Caco-2 (cell line): ENCODE measurements at regions of chr3 and their contacts with region 1.

Region 1: DNA sequence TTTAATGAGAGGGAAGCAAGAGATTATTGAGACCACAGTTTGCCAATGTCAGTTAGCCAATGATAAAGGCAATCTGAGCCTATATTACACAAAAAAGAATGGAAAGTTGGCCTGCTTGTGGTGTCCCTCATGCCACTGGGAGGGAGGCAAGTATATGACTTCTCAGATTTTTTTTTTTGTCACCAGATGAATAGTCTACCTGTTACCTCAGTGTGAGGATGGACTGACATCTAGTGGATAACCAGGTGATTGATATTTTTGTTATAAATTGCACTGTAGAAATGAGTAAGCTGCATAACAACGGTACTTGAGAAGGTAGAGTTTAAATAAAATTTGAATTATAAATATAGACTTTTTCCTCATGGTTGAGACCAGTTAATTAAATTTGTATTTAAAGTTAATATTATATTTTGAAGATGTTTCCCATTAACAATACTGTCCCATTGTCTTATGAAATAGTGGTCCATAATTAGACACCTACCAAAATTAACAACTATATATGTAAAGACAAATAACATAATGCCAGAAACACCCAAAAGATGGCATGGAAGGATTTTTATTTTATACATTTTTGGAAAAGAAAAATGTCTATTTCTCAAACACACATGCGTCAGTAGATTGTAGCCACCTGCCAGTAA is 237.8 kb upstream of the GADL1 start:
- DNase-seq: peak in 1 of 2 experiments; percentile 60
- H3K4me3 ChIP-seq: no peak overlapping the region
- H3K4me3 Mint-ChIP-seq: no peak overlapping the region
- H3K27ac Mint-ChIP-seq: no peak overlapping the region
- H3K4me1 ChIP-seq: peaks cover 8% of the 10 kb centered on the region
- H3K4me1 Mint-ChIP-seq: no peaks in the 10 kb centered on the region
- H3K27me3 ChIP-seq: no peaks in the 10 kb centered on the region
- H3K27me3 Mint-ChIP-seq: no peaks in the 10 kb centered on the region
- CTCF ChIP-seq: peak; percentile 63 to 69

Region 2: GRCh38 chr3:30012941-30013543 is 1119.2 kb before region 1 on chr3:
- CTCF ChIA-PET with region 1: no interaction called
- POLR2A ChIA-PET with region 1: no interaction called
- intact Hi-C with region 1: loop called (anchors 2 kb)
- DNase-seq: peak; percentile 71 to 76
- H3K4me3 ChIP-seq: no peak overlapping the region
- H3K4me3 Mint-ChIP-seq: no peak overlapping the region
- H3K27ac Mint-ChIP-seq: no peak overlapping the region
- H3K4me1 ChIP-seq: no peaks in the 10 kb centered on the region
- H3K4me1 Mint-ChIP-seq: no peaks in the 10 kb centered on the region
- H3K27me3 ChIP-seq: no peaks in the 10 kb centered on the region
- H3K27me3 Mint-ChIP-seq: no peaks in the 10 kb centered on the region
- CTCF ChIP-seq: peak; percentile 64 to 66

Region 3: GRCh38 chr3:30768703-30769685 is 363.3 kb before region 1 on chr3:
- CTCF ChIA-PET with region 1: interaction called, 14 read pairs
- POLR2A ChIA-PET with region 1: no interaction called
- intact Hi-C with region 1: loop called (anchors 1 kb)
- DNase-seq: peak; percentile 65 to 74
- H3K4me3 ChIP-seq: no peak overlapping the region
- H3K4me3 Mint-ChIP-seq: no peak overlapping the region
- H3K27ac Mint-ChIP-seq: no peak overlapping the region
- H3K4me1 ChIP-seq: peaks cover 14% of the 10 kb centered on the region
- H3K4me1 Mint-ChIP-seq: no peaks in the 10 kb centered on the region
- H3K27me3 ChIP-seq: no peaks in the 10 kb centered on the region
- H3K27me3 Mint-ChIP-seq: no peaks in the 10 kb centered on the region
- CTCF ChIP-seq: peak; percentile 78 to 79

Region 4: DNA sequence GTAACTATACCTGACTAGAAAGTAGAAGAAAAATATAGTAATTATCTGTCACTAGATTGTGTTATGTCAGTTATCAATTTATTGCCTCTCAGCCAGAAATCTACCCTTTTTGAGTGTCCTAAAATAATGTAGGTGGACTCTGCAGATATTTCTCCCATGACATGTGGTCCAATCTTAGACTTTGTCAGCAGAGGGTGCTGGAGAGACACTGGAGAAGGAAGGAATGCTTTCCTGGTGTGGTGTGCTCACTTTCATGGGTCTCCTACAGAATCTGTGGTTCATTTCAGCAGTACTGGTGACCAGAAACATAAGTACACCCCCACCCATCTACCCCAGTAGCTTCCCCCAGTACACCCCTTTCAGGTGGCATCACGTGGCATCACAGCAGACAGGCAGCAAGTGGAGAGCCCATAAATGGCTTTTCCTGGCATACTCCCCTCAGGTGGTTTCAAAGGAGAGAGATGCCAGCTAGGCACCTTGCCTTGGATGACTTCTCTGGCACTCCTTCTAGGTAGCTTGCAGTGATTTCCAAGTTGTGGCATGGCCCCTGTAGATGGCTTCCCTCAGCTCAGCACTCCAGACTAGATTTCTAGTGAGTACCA is 352.5 kb before region 1 on chr3:
- CTCF ChIA-PET with region 1: interaction called, 4 read pairs
- POLR2A ChIA-PET with region 1: no interaction called
- intact Hi-C with region 1: loop called (anchors 1 kb)
- DNase-seq: peak; percentile 42 to 70
- H3K4me3 ChIP-seq: no peak overlapping the region
- H3K4me3 Mint-ChIP-seq: no peak overlapping the region
- H3K27ac Mint-ChIP-seq: no peak overlapping the region
- H3K4me1 ChIP-seq: no peaks in the 10 kb centered on the region
- H3K4me1 Mint-ChIP-seq: peaks cover 11% of the 10 kb centered on the region
- H3K27me3 ChIP-seq: no peaks in the 10 kb centered on the region
- H3K27me3 Mint-ChIP-seq: no peaks in the 10 kb centered on the region
- CTCF ChIP-seq: peak; percentile 62 to 78

Region 5: DNA sequence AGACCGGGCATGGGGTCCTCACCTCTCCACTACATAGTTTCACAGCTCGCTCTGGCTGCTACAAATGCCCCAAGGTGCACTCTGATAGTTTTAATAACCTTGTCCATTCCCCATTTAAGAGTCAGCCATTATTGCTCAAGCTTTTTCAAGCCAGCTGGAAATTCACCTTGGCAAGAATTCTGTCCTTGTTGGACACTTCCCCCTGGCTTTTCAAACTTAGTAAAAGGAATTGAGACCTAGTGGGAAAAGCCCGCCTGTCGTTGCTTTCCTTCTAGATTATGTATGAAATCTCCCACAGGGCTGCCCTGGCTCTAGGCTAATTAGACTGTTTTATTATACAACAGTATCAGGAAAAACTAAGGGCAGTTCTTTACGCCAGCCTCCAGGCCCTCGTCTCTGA is 55.9 kb after region 1 on chr3:
- CTCF ChIA-PET with region 1: no interaction called
- POLR2A ChIA-PET with region 1: no interaction called
- intact Hi-C with region 1: no loop called
- DNase-seq: no peak
- H3K4me3 ChIP-seq: no peak overlapping the region
- H3K4me3 Mint-ChIP-seq: no peak overlapping the region
- H3K27ac Mint-ChIP-seq: no peak overlapping the region
- H3K4me1 ChIP-seq: peaks cover 21% of the 10 kb centered on the region
- H3K4me1 Mint-ChIP-seq: peaks cover 22% of the 10 kb centered on the region
- H3K27me3 ChIP-seq: no peaks in the 10 kb centered on the region
- H3K27me3 Mint-ChIP-seq: no peaks in the 10 kb centered on the region
- CTCF ChIP-seq: no peak